GM13976 (cell line): ENCODE measurements at regions of chr9 and their contacts with region 1.

Region 1: DNA sequence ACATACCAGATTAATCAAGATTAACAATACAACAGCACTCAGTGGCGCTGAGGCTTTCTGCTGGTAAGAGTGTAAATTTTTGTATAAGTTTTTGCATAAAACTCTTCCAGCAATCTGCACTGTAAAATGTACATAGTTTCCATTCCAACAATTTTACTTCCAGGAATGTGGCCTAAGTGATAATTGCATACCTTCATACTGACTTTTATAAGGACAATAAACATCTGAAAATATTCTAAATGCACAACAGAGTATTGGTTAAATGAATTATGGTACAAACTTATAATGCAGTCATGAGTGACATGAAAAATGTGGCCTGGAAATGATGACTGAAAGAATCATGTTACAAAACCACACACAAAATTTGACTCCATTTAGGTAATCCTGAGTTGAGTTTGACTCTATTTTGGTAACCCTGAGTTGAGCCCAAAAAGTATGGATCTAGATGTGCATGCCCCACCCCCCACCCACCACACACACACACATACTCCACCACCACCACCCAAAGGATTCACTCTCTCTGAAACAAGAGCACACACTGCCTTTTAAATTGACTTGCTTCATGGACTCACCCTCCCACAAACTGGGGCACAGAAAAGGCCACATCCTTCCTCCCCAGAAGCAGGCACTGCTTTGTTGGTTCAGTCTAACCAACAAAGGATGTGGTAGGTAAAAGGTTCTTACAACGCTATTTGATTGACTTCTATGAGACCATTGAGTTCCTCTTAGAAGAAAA is 137.6 kb downstream of the SUSD1 start:
- DNase-seq: peak; percentile 54
- CTCF ChIP-seq: no peak

Region 2: GRCh38 chr9:112074250-112075008 is 37.0 kb after region 1 on chr9:
- in situ Hi-C with region 1: loop called (anchors 5 kb)
- DNase-seq: peak; percentile 40
- CTCF ChIP-seq: peak; percentile 70

Region 3: GRCh38 chr9:112503170-112503569 is 465.7 kb after region 1 on chr9:
- in situ Hi-C with region 1: no loop called
- DNase-seq: no peak
- CTCF ChIP-seq: no peak